A549 (cell line): ENCODE measurements at regions of chr20 and their contacts with region 1.

Region 1: GRCh38 chr20:39049684-39050554 is 87.8 kb downstream of the DHX35 start:
- DNase-seq: peak; percentile 48 to 71
- ATAC-seq: peak; percentile 71 to 90
- H3K4me3 ChIP-seq: peak overlapping the region; percentile 58
- H3K27ac ChIP-seq: peak overlapping the region; percentile 80 to 93
- H3K4me1 ChIP-seq: 0 out of 3 replicates have a peak, but pooled peaks cover 4% of the 10 kb centered on the region
- CTCF ChIP-seq: peak; percentile 92
- EP300 ChIP-seq: no peak
- POLR2A ChIP-seq: peak; percentile 80
- RAD21 ChIP-seq: peak; percentile 82 to 93

Region 2: DNA sequence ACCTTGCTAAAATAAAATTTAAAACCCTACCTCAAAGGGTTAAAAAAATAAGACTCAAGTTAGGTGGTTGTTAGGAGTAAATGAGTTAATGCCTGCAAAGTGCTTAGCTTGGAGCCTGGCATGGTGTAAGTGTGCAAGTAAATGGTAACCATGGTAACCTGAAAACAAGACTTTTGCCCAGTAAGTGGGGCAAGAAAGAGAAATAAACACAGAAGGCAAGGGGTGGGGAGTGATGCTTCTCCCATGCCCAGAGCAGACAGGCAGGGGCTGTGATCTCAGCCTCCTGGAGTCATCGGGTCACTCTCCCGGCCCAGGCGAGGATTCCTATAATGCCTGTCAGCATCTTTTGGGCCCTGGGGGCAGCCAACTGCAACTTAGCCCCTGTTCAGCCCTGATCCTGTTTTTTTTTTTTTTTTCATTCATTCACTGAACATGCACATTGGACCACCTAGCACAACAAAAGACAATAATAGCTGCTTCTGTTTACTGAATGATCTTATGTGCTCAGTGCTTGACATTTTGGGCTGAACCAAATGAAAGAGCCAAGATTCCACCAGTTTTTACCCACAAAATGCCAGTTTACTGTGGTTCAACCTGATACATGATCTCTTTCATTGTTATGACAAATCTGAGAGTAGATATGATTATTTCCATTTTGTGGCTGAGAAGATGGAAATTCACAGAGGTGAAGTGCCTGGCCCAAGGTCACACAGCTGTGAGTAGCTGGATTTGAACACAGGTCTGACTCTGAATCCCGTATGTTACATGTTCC is 384.6 kb before region 1 on chr20:
- CTCF ChIA-PET with region 1: no interaction called
- POLR2A ChIA-PET with region 1: no interaction called
- DNase-seq: no peak
- ATAC-seq: peak in 1 of 2 experiments; percentile 44; a peak in 2 of 6 replicates
- H3K4me3 ChIP-seq: no peak overlapping the region
- H3K27ac ChIP-seq: no peak overlapping the region
- H3K4me1 ChIP-seq: no peaks in the 10 kb centered on the region
- CTCF ChIP-seq: no peak
- EP300 ChIP-seq: no peak
- POLR2A ChIP-seq: no peak
- RAD21 ChIP-seq: no peak

Region 3: DNA sequence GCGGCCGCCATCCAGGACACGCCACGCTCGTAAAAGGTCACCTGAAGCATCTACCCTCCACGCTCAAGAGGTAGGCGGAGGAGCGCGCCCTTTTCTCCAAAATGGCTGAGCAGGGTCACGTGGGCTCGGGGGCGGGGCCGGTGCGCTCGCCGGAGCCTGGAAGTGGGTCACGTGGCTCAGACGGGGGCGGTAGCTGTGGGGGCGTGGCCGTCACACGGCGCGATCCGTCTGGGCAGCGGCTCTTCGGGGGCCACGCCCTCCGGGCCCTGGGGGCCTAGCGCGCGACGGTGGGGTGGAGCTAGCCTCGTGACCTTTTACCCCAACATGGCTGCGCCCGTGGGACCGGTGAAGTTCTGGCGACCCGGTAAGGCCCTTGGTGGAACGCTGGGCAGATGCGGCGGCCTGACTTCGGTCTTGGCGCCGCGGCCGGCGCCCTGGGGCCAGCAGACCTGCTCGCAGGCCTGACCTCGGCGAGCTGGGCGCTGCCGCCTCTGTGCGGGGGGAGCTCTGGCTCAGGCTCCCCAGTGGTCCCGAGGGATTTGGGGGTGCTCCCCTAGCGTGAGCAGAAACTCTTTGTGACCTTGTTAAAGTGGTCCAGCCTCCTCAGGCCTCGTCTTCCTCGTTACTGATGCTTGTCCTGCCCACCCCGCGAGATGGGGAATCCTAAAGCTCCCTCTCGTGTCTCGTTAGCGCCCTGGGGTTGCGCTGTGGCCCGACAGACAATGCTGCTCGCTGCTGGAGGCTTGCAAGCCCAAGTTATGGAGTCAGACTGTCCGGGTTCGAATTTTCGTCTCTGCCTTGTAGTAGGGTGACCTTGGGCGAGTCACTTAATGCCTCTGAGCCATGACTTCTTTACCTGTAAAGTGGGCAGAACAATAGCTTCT is 87.6 kb before region 1 on chr20 and contains the start of gene DHX35:
- CTCF ChIA-PET with region 1: interaction called, 26 read pairs
- POLR2A ChIA-PET with region 1: no interaction called
- DNase-seq: peak; percentile 91 to 97
- ATAC-seq: peak; percentile 98 to 99
- H3K4me3 ChIP-seq: peak within 1 kb of the TSS; percentile 95
- H3K27ac ChIP-seq: peak within 1 kb of the TSS; percentile 95 to 98
- H3K4me1 ChIP-seq: peaks cover 15% of the 10 kb centered on the region; the same call in 2 of the 3 replicates
- CTCF ChIP-seq: peak; percentile 31; the same call in 2 of the 3 replicates
- EP300 ChIP-seq: no peak
- POLR2A ChIP-seq: peak; percentile 30
- RAD21 ChIP-seq: peak; percentile 17 to 19; a peak in 1 of 5 replicates
- polyA plus RNA-seq, gene DHX35: 13.8 and 14.4 TPM in 2 replicates

Region 4: GRCh38 chr20:39025883-39026282 is 24.0 kb before region 1 on chr20:
- CTCF ChIA-PET with region 1: interaction called, 18 read pairs
- POLR2A ChIA-PET with region 1: no interaction called
- DNase-seq: no peak
- ATAC-seq: no peak
- H3K4me3 ChIP-seq: no peak overlapping the region
- H3K27ac ChIP-seq: no peak overlapping the region
- H3K4me1 ChIP-seq: no peaks in the 10 kb centered on the region
- CTCF ChIP-seq: no peak
- EP300 ChIP-seq: no peak
- POLR2A ChIP-seq: no peak
- RAD21 ChIP-seq: no peak

Region 5: DNA sequence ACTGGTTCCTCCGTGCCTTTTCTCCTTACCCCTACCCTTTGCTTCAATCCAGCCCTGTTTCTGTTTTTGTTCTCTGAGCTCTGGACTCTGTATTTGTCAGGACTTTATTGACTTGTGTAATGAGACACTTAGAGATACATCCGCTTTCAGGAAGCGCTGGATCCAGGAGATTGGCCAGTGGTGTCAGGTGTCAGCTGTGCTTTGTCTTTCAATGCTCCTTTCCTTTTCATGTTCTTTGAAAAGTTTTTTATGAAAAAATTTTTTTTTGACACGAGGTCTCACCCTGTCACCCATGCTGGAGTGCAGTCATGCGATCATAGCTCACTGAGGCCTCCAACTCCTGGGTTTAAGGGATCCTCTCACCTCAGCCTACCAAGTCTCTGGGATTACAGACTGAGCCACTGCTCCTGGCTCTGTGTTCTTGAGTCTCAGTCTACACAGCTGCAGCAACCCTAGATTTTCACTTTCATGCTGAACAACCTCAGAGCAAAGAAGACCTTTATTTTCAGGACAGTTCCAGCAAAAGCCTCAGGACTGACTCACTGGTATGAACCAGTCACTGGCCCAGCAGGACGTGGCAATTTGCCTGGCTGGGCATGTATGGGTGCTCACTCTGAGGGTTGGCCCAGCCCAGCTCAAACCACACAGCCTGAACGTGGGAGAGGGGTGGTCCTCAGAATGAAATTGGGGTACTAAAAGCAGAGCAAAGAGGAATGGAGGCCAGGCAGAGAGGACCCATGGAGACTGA is 20.7 kb after region 1 on chr20:
- CTCF ChIA-PET with region 1: interaction called, 332 read pairs
- POLR2A ChIA-PET with region 1: interaction called, 3 read pairs
- DNase-seq: no peak
- ATAC-seq: peak; percentile 11 to 45; a peak in 2 of 6 replicates
- H3K4me3 ChIP-seq: no peak overlapping the region
- H3K27ac ChIP-seq: no peak overlapping the region
- H3K4me1 ChIP-seq: no peaks in the 10 kb centered on the region
- CTCF ChIP-seq: no peak
- EP300 ChIP-seq: no peak
- POLR2A ChIP-seq: no peak
- RAD21 ChIP-seq: no peak

Region 6: DNA sequence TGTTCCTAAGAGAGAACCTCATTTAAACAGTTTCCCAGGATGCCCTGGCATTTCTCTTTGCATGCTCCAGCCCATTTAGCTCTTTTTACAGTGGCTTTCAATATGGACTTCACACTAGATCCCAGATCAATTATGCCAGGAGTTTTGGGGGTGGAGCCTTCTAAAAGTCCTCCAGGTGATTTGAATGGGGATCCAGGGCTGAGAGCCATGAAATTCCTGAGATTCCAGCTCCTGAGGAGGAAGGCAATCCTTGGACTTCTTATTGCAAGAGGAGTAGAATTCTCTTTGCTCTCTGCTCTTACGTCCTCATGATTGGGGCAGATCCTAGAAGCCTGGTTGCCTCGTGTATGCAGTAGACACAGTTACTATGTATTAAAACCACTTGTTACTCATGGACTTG is 96.5 kb after region 1 on chr20:
- CTCF ChIA-PET with region 1: no interaction called
- POLR2A ChIA-PET with region 1: no interaction called
- DNase-seq: no peak
- ATAC-seq: no peak
- H3K4me3 ChIP-seq: no peak overlapping the region
- H3K27ac ChIP-seq: no peak overlapping the region
- H3K4me1 ChIP-seq: no peaks in the 10 kb centered on the region
- CTCF ChIP-seq: no peak
- EP300 ChIP-seq: no peak
- POLR2A ChIP-seq: no peak
- RAD21 ChIP-seq: no peak